PC-3 (cell line): ENCODE measurements at regions of chr2 and their contacts with region 1.

Region 1: GRCh38 chr2:158034199-158034866 is 67.3 kb upstream of the UPP2 start:
- DNase-seq: peak; percentile 76
- ATAC-seq: peak; percentile 91
- H3K4me3 ChIP-seq: no peak overlapping the region
- H3K27ac ChIP-seq: no peak overlapping the region
- H3K4me1 ChIP-seq: no peaks in the 10 kb centered on the region
- H3K27me3 ChIP-seq: peaks cover 12% of the 10 kb centered on the region
- CTCF ChIP-seq: peak; percentile 71

Region 2: GRCh38 chr2:157929871-157930667 is 104.3 kb before region 1 on chr2:
- CTCF ChIA-PET with region 1: no interaction called
- POLR2A ChIA-PET with region 1: no interaction called
- intact Hi-C with region 1: no loop called
- DNase-seq: no peak
- ATAC-seq: no peak
- H3K4me3 ChIP-seq: no peak overlapping the region
- H3K27ac ChIP-seq: no peak overlapping the region
- H3K4me1 ChIP-seq: peaks cover 6% of the 10 kb centered on the region
- H3K27me3 ChIP-seq: no peaks in the 10 kb centered on the region
- CTCF ChIP-seq: no peak

Region 3: GRCh38 chr2:158443612-158444011 is 409.3 kb after region 1 on chr2:
- CTCF ChIA-PET with region 1: no interaction called
- POLR2A ChIA-PET with region 1: no interaction called
- intact Hi-C with region 1: loop called (anchors 10 kb)
- DNase-seq: no peak
- ATAC-seq: no peak
- H3K4me3 ChIP-seq: no peak overlapping the region
- H3K27ac ChIP-seq: no peak overlapping the region
- H3K4me1 ChIP-seq: no peaks in the 10 kb centered on the region
- H3K27me3 ChIP-seq: no peaks in the 10 kb centered on the region
- CTCF ChIP-seq: no peak